ENCODE measurements at regions of chr1 and their contacts with region 1.

Region 1: DNA sequence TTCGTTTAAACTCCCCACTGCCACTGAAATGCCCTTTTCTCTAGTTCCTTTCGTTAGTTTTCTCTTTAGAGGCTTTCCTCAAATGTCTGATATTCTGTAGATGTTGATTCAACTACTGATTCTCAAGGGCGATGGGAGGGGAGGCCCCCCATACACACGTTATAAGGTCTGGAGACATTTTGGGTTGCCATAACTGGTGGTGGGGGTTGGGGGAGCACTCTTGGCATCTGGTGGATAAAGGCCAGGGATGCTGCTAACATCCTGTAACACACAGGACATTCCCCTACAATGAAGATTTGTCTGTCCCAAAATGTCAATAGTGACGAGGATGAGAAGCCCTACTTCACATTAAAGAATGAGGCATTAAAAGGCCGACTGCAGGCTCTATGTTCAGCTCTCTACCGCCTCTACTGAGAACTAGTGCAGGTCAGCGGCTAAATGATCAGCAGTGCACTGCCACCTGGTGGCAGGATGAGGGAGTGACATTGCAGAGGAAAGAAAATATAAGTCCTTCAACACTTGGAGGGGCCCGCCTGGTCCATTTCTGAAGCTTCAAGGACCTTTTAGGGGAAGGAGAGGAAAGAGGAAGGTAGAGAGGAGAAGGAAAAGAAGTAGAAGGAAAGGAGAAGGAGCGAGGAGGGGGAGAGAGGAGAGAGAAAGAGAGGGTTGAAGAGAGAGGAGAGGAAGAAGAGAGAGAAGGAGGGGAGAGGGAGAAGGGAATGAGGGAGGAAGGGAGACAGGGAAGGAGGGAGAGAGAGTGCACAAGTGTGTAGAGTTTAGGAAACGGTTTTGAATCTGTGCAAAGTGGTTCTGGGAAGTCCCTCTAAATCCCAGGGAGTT is 29.4 kb downstream of the ALG14 start:
- DNase-seq: peak; percentile 90
- ATAC-seq: peak; percentile 88

Region 2: DNA sequence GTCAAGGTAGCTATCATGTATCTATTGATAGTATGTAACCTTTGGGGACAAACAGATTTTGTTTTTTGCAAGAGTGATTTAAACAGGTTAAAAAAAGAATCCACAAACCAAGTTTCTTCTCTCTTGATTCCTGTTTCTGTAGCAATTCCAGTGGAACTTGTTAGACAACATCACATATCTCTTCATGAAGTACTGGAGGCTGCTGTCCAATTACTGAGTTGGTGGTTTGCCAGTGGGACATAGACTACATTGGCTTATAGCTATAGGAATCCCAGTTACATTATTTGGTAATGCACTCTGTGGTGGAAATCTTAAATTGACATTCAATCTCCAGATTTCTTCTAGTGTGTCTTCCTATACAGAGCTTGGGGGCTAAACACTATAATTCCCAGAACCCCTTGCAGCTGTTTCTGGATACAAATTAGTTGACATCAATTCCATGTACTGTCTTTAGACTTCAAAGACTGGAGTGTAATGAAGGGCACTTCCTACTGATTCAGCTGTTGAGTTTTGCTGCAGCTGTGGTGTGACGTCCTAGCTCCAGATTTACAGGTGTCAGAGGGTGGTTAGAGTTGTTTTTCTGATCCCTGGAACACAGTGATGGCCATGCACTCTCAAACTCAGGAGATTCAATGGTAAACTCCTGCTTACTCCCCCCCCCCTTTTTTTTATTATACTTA is 1104.8 kb before region 1 on chr1:
- intact Hi-C with region 1: no loop called
- DNase-seq: no peak
- ATAC-seq: no peak

Region 3: GRCh38 chr1:94854458-94855306 is 188.7 kb before region 1 on chr1:
- intact Hi-C with region 1: loop called (anchors 2 kb)
- DNase-seq: peak; percentile 93
- ATAC-seq: peak; percentile 98

Region 4: DNA sequence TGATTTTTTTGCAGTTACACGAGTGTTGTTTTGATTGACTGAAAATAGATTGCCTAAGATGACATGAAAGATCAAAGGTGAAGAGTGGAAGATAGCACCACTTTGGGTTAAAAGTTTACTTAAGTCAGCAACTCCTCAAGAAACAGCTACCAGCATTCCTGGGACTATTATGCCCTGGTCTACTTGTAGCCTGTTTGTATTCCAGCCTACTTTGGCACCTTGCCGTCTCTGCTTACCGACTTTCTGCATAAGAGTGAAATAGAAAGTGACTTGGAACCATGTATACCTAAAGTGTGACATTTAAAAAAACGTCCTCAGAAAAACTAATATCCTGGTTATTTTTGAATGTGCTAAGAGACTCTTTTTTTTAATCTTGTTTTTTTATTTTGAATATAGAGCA is 1046.8 kb after region 1 on chr1:
- intact Hi-C with region 1: no loop called
- DNase-seq: no peak
- ATAC-seq: no peak